Heart right ventricle (tissue), 16 donors: ENCODE measurements at regions of chr9 and their contacts with region 1.

Region 1: DNA sequence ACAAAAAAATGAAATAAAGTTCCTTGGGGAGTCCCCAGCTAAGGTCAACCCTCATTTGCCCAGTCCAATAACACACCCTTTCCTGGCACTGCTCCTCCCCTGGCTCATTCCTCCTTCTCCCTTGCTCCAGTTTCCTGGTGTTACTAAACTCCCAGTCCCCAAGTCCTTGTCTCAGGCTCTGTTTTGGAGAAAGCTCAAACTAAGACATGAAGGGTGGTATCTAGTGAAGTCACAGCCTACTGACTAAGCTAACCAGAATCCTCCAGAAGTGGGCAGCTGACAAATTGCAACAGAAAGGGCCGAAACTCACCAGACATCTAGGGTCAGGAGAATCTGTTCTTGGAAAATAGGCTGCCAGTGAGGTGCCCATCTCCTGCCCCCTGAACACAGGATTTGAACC is 118.8 kb upstream of the NEK6 start:
- DNase-seq: no peak
- ATAC-seq: peak in 1 of 8 donors; percentile 55
- H3K4me3 ChIP-seq: no peak overlapping the region
- H3K27ac ChIP-seq: no peak overlapping the region
- H3K4me1 ChIP-seq: peaks cover 0 to 9% (median 0%) of the 10 kb centered on the region in 9 donors
- H3K27me3 ChIP-seq: peaks cover 0 to 9% (median 0%) of the 10 kb centered on the region in 7 donors
- CTCF ChIP-seq: no peak

Region 2: GRCh38 chr9:124110307-124110915 is 28.6 kb before region 1 on chr9:
- intact Hi-C with region 1: loop called in 1 of 10 experiments (anchors 1 kb)
- DNase-seq: peak; percentile 35 to 60
- ATAC-seq: peak in 5 of 8 donors; percentile 59 to 79 (median 76)
- H3K4me3 ChIP-seq: no peak overlapping the region
- H3K27ac ChIP-seq: no peak overlapping the region
- H3K4me1 ChIP-seq: no peaks in the 10 kb centered on the region
- H3K27me3 ChIP-seq: peaks cover 0 to 25% (median 14%) of the 10 kb centered on the region in 7 donors
- CTCF ChIP-seq: no peak